Caco-2 (cell line): ENCODE measurements at regions of chr15 and their contacts with region 1.

Region 1: DNA sequence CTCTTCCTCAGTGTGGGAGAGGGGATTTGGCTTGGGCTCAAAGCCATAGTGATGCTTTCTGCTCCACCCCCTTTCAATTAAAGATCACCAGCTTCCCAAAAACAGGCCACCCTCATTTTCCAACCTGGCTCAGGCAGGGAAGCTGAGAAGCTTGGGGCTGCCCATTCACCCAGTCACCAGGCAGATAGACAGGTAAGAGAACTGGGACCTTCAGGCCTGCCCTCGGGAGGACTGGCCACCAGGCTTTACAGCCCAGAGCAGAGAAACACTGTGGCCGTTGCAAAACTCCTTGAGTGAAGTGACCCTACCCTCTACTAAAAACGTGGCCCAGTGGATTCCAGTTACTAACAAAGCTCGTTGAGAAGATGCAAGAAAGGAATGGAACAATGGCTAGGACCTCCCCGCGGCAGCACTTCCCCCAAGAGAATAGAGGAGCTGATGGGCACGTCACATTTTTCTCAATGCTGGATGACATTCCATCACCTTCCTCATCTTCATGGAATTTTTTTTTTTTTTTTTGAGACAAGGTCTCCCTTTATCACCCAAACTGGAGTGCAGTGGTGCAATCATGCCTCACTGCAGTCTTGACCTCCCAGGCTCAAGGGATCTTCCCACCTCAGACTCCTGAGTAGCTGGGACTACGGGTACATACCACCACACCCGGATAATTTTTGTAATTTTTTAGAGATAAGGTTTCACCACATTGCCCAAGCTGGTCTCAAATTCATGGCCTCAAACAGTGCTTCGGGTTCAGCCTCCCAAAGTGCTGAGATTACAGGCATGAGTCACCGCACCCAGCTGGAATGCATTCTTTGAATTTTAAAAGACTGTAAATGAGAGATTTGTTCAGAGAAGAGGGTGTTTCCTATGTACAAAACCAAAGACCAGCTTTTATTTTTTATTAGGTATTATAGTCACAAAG is 37.9 kb downstream of the LIPC start:
- DNase-seq: peak; percentile 86 to 91
- H3K4me3 ChIP-seq: no peak overlapping the region
- H3K4me3 Mint-ChIP-seq: peak overlapping the region; percentile 57
- H3K27ac Mint-ChIP-seq: peak overlapping the region; percentile 86
- H3K4me1 ChIP-seq: peaks cover 69% of the 10 kb centered on the region
- H3K4me1 Mint-ChIP-seq: peaks cover 49% of the 10 kb centered on the region
- H3K27me3 ChIP-seq: no peaks in the 10 kb centered on the region
- H3K27me3 Mint-ChIP-seq: no peaks in the 10 kb centered on the region
- CTCF ChIP-seq: no peak

Region 2: DNA sequence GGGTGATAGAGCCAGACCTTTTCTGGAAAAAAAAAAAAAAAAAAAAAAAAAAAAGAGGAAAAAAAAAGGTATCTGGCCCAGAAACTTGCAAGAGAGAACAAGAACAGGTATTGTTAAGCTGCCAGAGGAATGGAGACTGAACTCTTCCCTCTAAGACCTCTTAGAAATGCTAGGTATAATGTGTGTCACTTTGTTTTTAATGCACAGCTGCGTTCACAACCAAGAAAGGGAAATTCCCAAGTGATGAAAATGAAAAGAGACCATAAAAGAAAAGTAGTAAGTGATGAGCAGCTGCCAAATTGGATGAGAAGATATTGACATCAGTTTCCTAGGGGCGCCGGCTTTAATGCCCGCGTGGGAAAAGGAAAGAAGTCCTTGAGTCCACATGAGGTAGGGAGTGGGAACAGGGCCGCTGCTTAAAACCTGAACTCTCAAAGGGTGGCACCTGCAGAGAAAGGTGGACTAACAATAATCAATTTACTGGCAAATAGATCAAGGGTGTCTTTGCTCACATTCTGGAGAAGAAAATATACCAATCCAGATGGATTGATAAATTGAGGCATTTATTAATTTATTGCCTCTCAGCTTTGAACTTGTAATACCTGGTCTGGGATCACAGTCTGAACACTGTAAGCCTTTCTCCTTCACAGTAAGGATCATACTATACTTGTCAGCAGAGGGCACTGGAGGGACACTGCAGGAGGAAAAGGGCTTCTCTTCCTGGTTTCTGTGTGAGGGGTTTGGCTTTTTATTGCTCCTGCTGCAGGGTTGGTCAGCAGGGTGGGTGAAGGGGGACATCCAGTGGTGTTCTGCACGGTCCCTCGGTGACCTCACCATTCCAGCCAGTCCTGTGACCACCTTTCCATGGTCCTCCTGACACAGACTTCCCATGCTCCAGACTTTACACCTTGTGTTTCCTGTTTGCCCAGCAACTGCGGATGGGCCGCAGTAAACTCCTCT is 200.0 kb before region 1 on chr15:
- CTCF ChIA-PET with region 1: no interaction called
- POLR2A ChIA-PET with region 1: no interaction called
- intact Hi-C with region 1: loop called (anchors 1 kb)
- DNase-seq: peak; percentile 63 to 72
- H3K4me3 ChIP-seq: no peak overlapping the region
- H3K4me3 Mint-ChIP-seq: no peak overlapping the region
- H3K27ac Mint-ChIP-seq: peak overlapping the region; percentile 39
- H3K4me1 ChIP-seq: peaks cover 14% of the 10 kb centered on the region
- H3K4me1 Mint-ChIP-seq: peaks cover 17% of the 10 kb centered on the region
- H3K27me3 ChIP-seq: no peaks in the 10 kb centered on the region
- H3K27me3 Mint-ChIP-seq: no peaks in the 10 kb centered on the region
- CTCF ChIP-seq: peak; percentile 73 to 78

Region 3: GRCh38 chr15:58393241-58393662 is 76.4 kb before region 1 on chr15:
- CTCF ChIA-PET with region 1: no interaction called
- POLR2A ChIA-PET with region 1: interaction called, 3 read pairs
- intact Hi-C with region 1: loop called (anchors 2 kb)
- DNase-seq: peak; percentile 29 to 63
- H3K4me3 ChIP-seq: no peak overlapping the region
- H3K4me3 Mint-ChIP-seq: no peak overlapping the region
- H3K27ac Mint-ChIP-seq: peak overlapping the region; percentile 90
- H3K4me1 ChIP-seq: peaks cover 81% of the 10 kb centered on the region
- H3K4me1 Mint-ChIP-seq: peaks cover 83% of the 10 kb centered on the region
- H3K27me3 ChIP-seq: no peaks in the 10 kb centered on the region
- H3K27me3 Mint-ChIP-seq: no peaks in the 10 kb centered on the region
- CTCF ChIP-seq: no peak

Region 4: DNA sequence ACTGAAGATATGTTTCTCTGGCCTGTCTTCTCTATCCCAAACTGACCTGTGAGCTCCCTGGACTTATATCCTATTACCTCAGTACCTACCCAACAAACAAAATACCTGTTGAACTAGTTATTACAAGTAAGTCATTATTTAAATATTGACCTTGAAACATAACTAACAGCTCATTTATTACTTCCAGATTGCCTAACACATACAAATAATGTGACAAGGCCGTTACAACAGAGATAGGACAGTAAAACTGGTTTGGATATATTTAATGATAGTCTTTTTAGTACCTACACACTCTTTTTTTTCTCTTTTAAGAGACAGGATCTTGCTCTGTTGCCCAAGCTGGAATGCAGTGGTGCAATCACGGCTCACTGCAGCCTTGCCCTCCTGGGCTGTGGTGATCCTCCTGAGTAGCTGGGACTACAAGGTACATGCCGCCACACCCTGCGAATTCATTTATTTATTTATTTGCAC is 134.8 kb after region 1 on chr15:
- CTCF ChIA-PET with region 1: interaction called, 3 read pairs
- POLR2A ChIA-PET with region 1: interaction called, 3 read pairs
- intact Hi-C with region 1: loop called (anchors 5 kb)
- DNase-seq: peak; percentile 78 to 87
- H3K4me3 ChIP-seq: no peak overlapping the region
- H3K4me3 Mint-ChIP-seq: peak overlapping the region; percentile 17
- H3K27ac Mint-ChIP-seq: peak overlapping the region; percentile 60
- H3K4me1 ChIP-seq: peaks cover 17% of the 10 kb centered on the region
- H3K4me1 Mint-ChIP-seq: peaks cover 23% of the 10 kb centered on the region
- H3K27me3 ChIP-seq: no peaks in the 10 kb centered on the region
- H3K27me3 Mint-ChIP-seq: no peaks in the 10 kb centered on the region
- CTCF ChIP-seq: no peak